ENCODE measurements at regions of chr17 and their contacts with region 1.

Region 1: DNA sequence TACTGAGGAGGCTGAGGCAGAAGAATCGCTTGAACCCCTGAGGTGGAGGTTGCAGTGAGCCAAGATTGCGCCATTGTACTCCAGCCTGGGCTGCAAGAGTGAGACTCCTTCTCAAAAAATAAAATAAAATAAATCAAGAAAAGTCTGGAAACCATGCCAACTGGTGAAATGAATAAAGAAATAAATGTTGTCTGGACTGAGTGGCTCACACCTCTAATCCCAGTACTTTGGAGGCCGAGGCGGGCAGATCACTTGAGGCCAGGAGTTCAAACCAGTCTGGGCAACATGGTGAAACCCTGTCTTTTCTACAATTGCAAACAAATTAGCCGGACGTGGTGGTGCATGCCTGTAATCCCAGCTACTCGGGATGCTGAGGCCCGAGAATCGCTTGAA is 744 bp upstream of the LRRC37A3 start:
- DNase-seq: no peak
- H3K4me3 Mint-ChIP-seq: peak overlapping the region; percentile 81
- H3K27ac Mint-ChIP-seq: peak overlapping the region; percentile 93
- H3K4me1 Mint-ChIP-seq: peaks cover 15% of the 10 kb centered on the region
- H3K27me3 Mint-ChIP-seq: no peaks in the 10 kb centered on the region

Region 2: GRCh38 chr17:64940055-64940454 is 20.0 kb after region 1 on chr17:
- CTCF ChIA-PET with region 1: interaction called, 11 read pairs
- POLR2A ChIA-PET with region 1: no interaction called
- DNase-seq: no peak
- H3K4me3 Mint-ChIP-seq: no peak overlapping the region
- H3K27ac Mint-ChIP-seq: no peak overlapping the region
- H3K4me1 Mint-ChIP-seq: peaks cover 15% of the 10 kb centered on the region
- H3K27me3 Mint-ChIP-seq: no peaks in the 10 kb centered on the region